ENCODE measurements at regions of chr2 and their contacts with region 1.

Region 1: GRCh38 chr2:109613922-109614714 is at the starts of genes SEPTIN10 and SOWAHC:
- DNase-seq: peak; percentile 57
- ATAC-seq: peak; percentile 88
- H3K4me3 ChIP-seq: peak within 1 kb of the TSS; percentile 62
- H3K27ac ChIP-seq: peak within 1 kb of the TSS; percentile 70
- H3K4me1 ChIP-seq: no peaks in the 10 kb centered on the region
- H3K27me3 ChIP-seq: no peaks in the 10 kb centered on the region
- CTCF ChIP-seq: no peak
- EP300 ChIP-seq: no peak
- POLR2A ChIP-seq: peak; percentile 73
- RAD21 ChIP-seq: no peak
- polyA plus RNA-seq, gene SEPTIN10: 32.7 to 38.6 TPM
- polyA plus RNA-seq, gene SOWAHC: 1.0 to 1.1 TPM

Region 2: DNA sequence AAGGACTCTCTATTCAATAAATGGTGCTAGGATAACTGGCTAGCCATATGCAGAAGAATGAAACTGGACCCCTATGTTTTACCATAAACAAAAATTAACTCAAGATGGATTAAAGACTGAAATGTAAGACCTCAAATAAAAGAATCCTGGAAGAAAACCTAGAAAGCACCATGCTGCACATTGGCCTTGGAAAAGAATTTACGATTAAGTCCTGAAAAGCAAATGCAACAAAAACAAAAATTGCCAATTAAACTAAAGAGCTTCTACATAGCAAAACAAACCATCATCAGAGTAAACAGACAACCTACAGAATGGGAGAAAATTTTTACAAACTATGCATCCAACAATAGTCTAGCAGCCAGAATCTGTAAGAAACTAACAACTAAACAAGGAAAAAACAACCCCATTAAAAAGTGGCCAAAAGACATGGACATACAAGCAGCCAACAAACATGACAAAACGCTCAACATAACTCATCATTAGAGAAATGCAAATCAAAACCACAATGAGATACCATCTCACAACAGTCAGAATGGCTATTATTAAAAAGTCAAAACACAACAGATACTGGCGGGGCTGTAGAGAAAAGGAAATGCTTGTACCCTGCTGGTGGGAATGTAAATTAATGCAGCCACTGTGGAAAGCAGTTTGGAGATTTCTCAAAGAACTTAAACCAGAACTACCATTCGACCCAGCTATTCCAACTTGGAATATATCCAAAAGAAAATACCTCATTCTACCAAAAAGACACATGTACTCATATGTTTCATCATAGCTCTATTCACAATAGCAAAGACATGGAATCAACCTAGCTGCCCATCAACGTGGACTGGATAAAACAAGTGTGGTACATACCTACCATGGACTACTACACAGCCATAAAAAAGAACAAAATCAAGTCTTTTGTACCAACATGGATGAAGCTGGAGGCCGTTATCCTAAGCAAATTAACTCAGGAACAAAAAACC is 30.9 kb before region 1 on chr2:
- CTCF ChIA-PET with region 1: interaction called, 4 read pairs
- POLR2A ChIA-PET with region 1: interaction called, 6 read pairs
- RAD21 ChIA-PET with region 1: interaction called, 34 read pairs
- SMC1A ChIA-PET with region 1: interaction called, 33 read pairs
- in situ Hi-C with region 1: no loop called
- intact Hi-C with region 1: loop called (anchors 2 kb)
- DNase-seq: peak; percentile 45
- ATAC-seq: peak; percentile 84
- H3K4me3 ChIP-seq: no peak overlapping the region
- H3K27ac ChIP-seq: peak overlapping the region; percentile 50
- H3K4me1 ChIP-seq: peaks cover 27% of the 10 kb centered on the region
- H3K27me3 ChIP-seq: no peaks in the 10 kb centered on the region
- CTCF ChIP-seq: no peak
- EP300 ChIP-seq: peak in 1 of 2 experiments; percentile 46; a peak in 1 of 4 replicates
- POLR2A ChIP-seq: no peak
- RAD21 ChIP-seq: no peak

Region 3: GRCh38 chr2:109594246-109594885 is 19.8 kb before region 1 on chr2:
- CTCF ChIA-PET with region 1: interaction called, 34 read pairs
- POLR2A ChIA-PET with region 1: interaction called, 5 read pairs
- RAD21 ChIA-PET with region 1: interaction called, 29 read pairs
- SMC1A ChIA-PET with region 1: interaction called, 74 read pairs
- in situ Hi-C with region 1: no loop called
- intact Hi-C with region 1: loop called (anchors 1 kb)
- DNase-seq: no peak
- ATAC-seq: no peak
- H3K4me3 ChIP-seq: no peak overlapping the region
- H3K27ac ChIP-seq: no peak overlapping the region
- H3K4me1 ChIP-seq: peaks cover 16% of the 10 kb centered on the region
- H3K27me3 ChIP-seq: no peaks in the 10 kb centered on the region
- CTCF ChIP-seq: no peak
- EP300 ChIP-seq: no peak
- POLR2A ChIP-seq: no peak
- RAD21 ChIP-seq: no peak

Region 4: GRCh38 chr2:109663721-109664120 is 49.6 kb after region 1 on chr2:
- CTCF ChIA-PET with region 1: interaction called, 19 read pairs
- POLR2A ChIA-PET with region 1: no interaction called
- RAD21 ChIA-PET with region 1: interaction called, 12 read pairs
- SMC1A ChIA-PET with region 1: interaction called, 6 read pairs
- in situ Hi-C with region 1: no loop called
- intact Hi-C with region 1: loop called (anchors 5 kb)
- DNase-seq: no peak
- ATAC-seq: no peak
- H3K4me3 ChIP-seq: no peak overlapping the region
- H3K27ac ChIP-seq: no peak overlapping the region
- H3K4me1 ChIP-seq: no peaks in the 10 kb centered on the region
- H3K27me3 ChIP-seq: no peaks in the 10 kb centered on the region
- CTCF ChIP-seq: no peak
- EP300 ChIP-seq: no peak
- POLR2A ChIP-seq: no peak
- RAD21 ChIP-seq: no peak

Region 5: DNA sequence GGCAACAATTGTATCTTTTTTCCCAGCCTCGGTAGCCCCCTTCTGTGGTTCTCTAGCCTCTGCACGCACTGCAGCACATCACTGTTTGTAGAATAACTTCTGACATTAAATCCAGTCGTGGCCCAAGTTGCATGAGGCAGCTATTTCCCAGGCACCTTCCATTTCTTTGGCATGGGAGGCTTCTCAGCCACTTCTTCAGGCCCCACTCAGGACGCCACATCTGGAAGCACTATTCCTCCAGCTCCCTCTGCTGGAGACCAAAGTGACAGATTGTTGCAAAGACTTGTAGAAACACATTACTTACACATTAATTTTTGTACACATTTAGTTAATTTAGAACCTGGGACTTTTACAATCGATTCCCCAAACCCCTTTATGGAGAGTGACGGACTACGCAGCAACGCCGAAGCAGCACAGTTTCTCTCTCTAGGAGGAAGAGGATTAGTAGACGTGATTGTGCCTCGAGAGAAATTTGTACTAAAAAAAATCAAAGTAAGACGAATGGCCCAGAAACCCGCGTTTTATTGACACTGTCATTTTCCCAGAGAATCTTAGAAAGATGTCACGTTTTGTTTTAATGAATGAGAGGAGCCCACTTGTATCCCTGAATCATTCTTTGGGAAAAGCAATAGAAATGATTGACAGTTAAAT is 122.2 kb after region 1 on chr2:
- CTCF ChIA-PET with region 1: interaction called, 21 read pairs
- POLR2A ChIA-PET with region 1: no interaction called
- RAD21 ChIA-PET with region 1: interaction called, 4 read pairs
- SMC1A ChIA-PET with region 1: interaction called, 4 read pairs
- in situ Hi-C with region 1: no loop called
- intact Hi-C with region 1: loop called (anchors 2 kb)
- DNase-seq: no peak
- ATAC-seq: peak; percentile 82
- H3K4me3 ChIP-seq: no peak overlapping the region
- H3K27ac ChIP-seq: no peak overlapping the region
- H3K4me1 ChIP-seq: no peaks in the 10 kb centered on the region
- H3K27me3 ChIP-seq: no peaks in the 10 kb centered on the region
- CTCF ChIP-seq: peak; percentile 58 to 67 (median 58); a peak in 5 of 6 replicates
- EP300 ChIP-seq: no peak
- POLR2A ChIP-seq: no peak
- RAD21 ChIP-seq: peak; percentile 77